PC-9 (cell line): ENCODE measurements at regions of chr1 and their contacts with region 1.

Region 1: GRCh38 chr1:28581536-28582247 is 10.4 kb upstream of the RAB42 start:
- DNase-seq: peak; percentile 84 to 93
- H3K4me3 ChIP-seq: peak overlapping the region; percentile 87
- H3K27ac ChIP-seq: peak overlapping the region; percentile 81
- H3K4me1 ChIP-seq: peaks cover 9% of the 10 kb centered on the region
- H3K27me3 ChIP-seq: no peaks in the 10 kb centered on the region
- CTCF ChIP-seq: no peak

Region 2: DNA sequence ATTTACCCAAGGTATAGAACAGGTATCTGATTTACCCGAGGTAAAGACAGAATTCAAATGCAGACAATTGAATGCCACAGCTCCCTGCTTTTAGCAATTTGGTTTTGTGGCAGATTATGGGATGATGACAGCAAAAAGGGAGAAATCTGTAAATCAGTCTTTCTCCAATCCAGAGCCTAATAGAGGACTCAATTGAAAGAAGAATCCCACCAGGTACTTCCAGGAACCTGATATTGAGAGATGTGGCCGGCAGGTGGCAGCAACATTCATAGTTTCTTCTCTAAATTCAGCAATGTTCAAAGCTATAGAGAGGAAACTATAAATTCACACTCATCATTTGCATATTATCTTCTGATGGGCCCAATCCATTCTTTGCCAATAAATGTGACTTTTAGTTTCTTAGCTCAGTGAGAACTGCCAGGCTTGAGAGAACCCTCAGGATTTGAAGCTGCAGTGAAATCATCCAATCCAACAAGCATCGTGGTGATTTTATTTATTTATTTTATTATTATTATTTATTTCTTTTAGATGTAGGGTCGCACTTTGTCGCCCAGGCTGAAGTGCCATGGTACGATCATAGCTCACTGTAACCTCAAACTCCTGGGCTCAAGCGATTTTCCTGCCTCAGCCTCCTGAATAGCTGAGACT is 222.0 kb before region 1 on chr1:
- CTCF ChIA-PET with region 1: no interaction called
- POLR2A ChIA-PET with region 1: interaction called, 13 read pairs
- intact Hi-C with region 1: no loop called
- DNase-seq: peak; percentile 35 to 62
- H3K4me3 ChIP-seq: no peak overlapping the region
- H3K27ac ChIP-seq: no peak overlapping the region
- H3K4me1 ChIP-seq: peaks cover 4% of the 10 kb centered on the region; the same call in 1 of the 2 replicates
- H3K27me3 ChIP-seq: no peaks in the 10 kb centered on the region
- CTCF ChIP-seq: peak; percentile 73

Region 3: DNA sequence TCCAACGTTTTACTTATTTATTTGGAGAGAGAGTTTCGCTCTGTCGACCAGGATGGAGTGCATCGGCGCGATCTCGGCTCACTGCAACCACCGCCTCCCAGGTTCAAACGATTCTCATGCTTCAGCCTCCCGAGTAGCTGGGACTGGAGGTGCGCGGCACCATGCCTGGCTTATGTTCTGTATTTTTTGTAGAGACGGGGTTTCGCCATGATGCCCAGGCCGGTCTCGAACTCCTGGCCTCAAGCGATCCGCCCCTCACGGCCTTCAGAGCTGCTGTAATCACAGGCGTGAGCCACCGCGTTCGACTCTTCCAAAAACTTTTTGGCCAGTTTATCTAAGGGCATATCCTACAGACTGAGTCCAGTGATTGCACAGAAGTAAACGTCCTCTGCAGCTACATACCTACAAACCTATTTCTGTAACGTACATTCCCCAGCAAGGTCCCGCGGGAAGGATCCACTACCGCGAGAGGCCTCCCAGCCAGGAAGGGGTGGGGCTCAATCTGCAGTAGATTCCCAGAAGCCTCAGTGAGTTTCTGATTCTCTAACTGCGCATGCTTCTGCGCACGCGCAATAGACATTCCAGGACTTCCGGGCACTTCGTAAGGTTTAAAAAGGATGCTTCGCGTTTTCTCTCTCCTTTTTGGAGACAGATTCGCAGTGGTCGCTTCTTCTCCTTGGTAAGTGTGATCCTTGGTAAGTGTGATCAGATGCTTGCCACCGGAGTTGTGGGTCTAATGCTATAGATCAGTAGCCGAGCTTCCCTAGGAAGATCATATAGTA is 76.1 kb before region 1 on chr1 and contains the start of gene RCC1:
- CTCF ChIA-PET with region 1: no interaction called
- POLR2A ChIA-PET with region 1: interaction called, 33 read pairs
- intact Hi-C with region 1: loop called (anchors 2 kb)
- DNase-seq: peak; percentile 92 to 95
- H3K4me3 ChIP-seq: peak within 1 kb of the TSS; percentile 83
- H3K27ac ChIP-seq: peak within 1 kb of the TSS; percentile 99
- H3K4me1 ChIP-seq: peaks cover 38% of the 10 kb centered on the region
- H3K27me3 ChIP-seq: 0 out of 2 replicates have a peak, but pooled peaks cover 3% of the 10 kb centered on the region
- CTCF ChIP-seq: no peak
- total RNA-seq, gene RCC1: 134 and 156 TPM in 2 replicates

Region 4: GRCh38 chr1:28540651-28541050 is 41.0 kb before region 1 on chr1:
- CTCF ChIA-PET with region 1: interaction called, 15 read pairs
- POLR2A ChIA-PET with region 1: no interaction called
- intact Hi-C with region 1: no loop called
- DNase-seq: no peak
- H3K4me3 ChIP-seq: no peak overlapping the region
- H3K27ac ChIP-seq: no peak overlapping the region
- H3K4me1 ChIP-seq: no peaks in the 10 kb centered on the region
- H3K27me3 ChIP-seq: no peaks in the 10 kb centered on the region
- CTCF ChIP-seq: no peak

Region 5: GRCh38 chr1:28632560-28632959 is 50.9 kb after region 1 on chr1:
- CTCF ChIA-PET with region 1: no interaction called
- POLR2A ChIA-PET with region 1: no interaction called
- intact Hi-C with region 1: no loop called
- DNase-seq: no peak
- H3K4me3 ChIP-seq: no peak overlapping the region
- H3K27ac ChIP-seq: no peak overlapping the region
- H3K4me1 ChIP-seq: no peaks in the 10 kb centered on the region
- H3K27me3 ChIP-seq: no peaks in the 10 kb centered on the region
- CTCF ChIP-seq: no peak

Region 6: DNA sequence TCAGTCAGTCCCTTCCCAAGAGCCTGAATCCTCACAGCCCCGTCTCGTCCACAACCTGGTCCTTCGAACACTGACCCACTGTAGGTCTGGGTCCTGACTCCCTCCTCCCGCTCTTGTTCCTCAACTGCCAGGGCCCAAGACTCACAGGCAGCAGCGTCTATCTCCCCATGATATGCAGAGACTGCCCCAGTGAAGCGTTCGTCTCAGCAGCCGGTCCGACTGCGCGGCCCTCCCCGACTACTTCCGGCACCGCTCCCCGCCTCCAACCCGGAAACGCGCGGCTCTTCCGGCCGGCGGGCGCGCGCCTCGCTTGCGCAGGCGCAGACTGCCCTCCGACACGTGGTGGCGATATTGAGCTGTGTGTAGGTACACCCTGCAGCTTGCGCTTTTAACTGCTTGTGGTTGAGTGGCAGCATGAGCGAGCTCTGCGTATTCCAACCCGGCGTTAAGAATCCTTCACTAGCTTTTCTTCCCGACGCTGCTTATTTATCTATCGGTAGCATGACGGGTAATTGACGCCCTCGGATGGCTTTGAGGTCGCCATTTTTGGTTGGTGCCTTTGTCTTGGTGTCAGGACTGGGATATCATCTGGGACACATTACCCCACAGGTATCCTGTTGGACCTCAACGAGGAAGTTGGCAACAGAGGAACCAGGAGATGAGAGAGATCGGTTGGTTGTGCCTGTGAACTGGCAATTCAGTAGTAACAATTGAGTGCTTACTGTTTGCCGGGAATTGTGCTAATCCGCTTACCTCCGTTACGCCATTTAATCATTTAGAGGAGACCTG is 61.3 kb after region 1 on chr1 and contains the start of gene TAF12:
- CTCF ChIA-PET with region 1: interaction called, 4 read pairs
- POLR2A ChIA-PET with region 1: interaction called, 45 read pairs
- intact Hi-C with region 1: no loop called
- DNase-seq: peak; percentile 81 to 85
- H3K4me3 ChIP-seq: peak within 1 kb of the TSS; percentile 91
- H3K27ac ChIP-seq: peak within 1 kb of the TSS; percentile 97
- H3K4me1 ChIP-seq: peaks cover 16% of the 10 kb centered on the region
- H3K27me3 ChIP-seq: no peaks in the 10 kb centered on the region
- CTCF ChIP-seq: no peak; the same call in 1 of the 2 replicates
- total RNA-seq, gene TAF12: 19.9 and 28.4 TPM in 2 replicates